A673 (cell line): ENCODE measurements at regions of chr3 and their contacts with region 1.

Region 1: GRCh38 chr3:124032648-124033359 is 40.9 kb upstream of the ROPN1 start:
- DNase-seq: peak; percentile 90
- H3K4me3 ChIP-seq: peak overlapping the region; percentile 83
- H3K27ac ChIP-seq: peak overlapping the region; percentile 82
- H3K4me1 ChIP-seq: no peaks in the 10 kb centered on the region
- H3K27me3 ChIP-seq: peaks cover 12% of the 10 kb centered on the region
- CTCF ChIP-seq: peak; percentile 74

Region 2: GRCh38 chr3:124078953-124079911 is 46.4 kb after region 1 on chr3:
- CTCF ChIA-PET with region 1: no interaction called
- POLR2A ChIA-PET with region 1: no interaction called
- intact Hi-C with region 1: loop called (anchors 5 kb)
- DNase-seq: peak; percentile 58
- H3K4me3 ChIP-seq: no peak overlapping the region
- H3K27ac ChIP-seq: no peak overlapping the region
- H3K4me1 ChIP-seq: peaks cover 2% of the 10 kb centered on the region
- H3K27me3 ChIP-seq: no peaks in the 10 kb centered on the region
- CTCF ChIP-seq: peak; percentile 83

Region 3: DNA sequence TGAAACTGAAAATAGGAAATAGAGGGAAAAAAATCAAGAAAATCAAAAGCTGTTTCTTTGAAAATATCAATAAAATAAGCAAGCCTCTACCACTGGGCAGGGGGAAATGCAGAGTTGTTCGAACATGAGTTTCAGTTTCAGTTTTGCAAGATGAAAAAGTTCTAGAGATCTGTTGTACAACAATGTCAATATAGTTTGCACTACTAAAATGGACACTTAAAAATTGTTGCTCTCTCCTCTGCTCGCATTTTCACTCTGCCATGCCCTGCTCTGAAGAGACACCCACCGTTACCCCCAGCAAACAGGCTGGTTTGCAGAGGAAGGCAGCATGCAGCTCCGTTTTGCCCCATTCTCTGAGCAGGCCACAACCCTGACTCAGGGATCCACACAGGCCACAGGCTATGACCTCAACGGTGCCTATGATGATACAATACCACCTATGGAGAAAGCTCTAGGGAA is 1277.8 kb after region 1 on chr3:
- CTCF ChIA-PET with region 1: no interaction called
- POLR2A ChIA-PET with region 1: interaction called, 15 read pairs
- intact Hi-C with region 1: no loop called
- DNase-seq: no peak
- H3K4me3 ChIP-seq: no peak overlapping the region
- H3K27ac ChIP-seq: no peak overlapping the region
- H3K4me1 ChIP-seq: no peaks in the 10 kb centered on the region
- H3K27me3 ChIP-seq: no peaks in the 10 kb centered on the region
- CTCF ChIP-seq: no peak